PC-9 (cell line): ENCODE measurements at regions of chr4 and their contacts with region 1.

Region 1: GRCh38 chr4:41934815-41935651 is at the start of gene TMEM33:
- DNase-seq: peak; percentile 87 to 88
- H3K4me3 ChIP-seq: peak within 1 kb of the TSS; percentile 98
- H3K27ac ChIP-seq: peak within 1 kb of the TSS; percentile 69
- H3K4me1 ChIP-seq: peaks cover 42% of the 10 kb centered on the region
- H3K27me3 ChIP-seq: no peaks in the 10 kb centered on the region
- CTCF ChIP-seq: no peak
- total RNA-seq, gene TMEM33: 62.3 and 65.0 TPM in 2 replicates

Region 2: DNA sequence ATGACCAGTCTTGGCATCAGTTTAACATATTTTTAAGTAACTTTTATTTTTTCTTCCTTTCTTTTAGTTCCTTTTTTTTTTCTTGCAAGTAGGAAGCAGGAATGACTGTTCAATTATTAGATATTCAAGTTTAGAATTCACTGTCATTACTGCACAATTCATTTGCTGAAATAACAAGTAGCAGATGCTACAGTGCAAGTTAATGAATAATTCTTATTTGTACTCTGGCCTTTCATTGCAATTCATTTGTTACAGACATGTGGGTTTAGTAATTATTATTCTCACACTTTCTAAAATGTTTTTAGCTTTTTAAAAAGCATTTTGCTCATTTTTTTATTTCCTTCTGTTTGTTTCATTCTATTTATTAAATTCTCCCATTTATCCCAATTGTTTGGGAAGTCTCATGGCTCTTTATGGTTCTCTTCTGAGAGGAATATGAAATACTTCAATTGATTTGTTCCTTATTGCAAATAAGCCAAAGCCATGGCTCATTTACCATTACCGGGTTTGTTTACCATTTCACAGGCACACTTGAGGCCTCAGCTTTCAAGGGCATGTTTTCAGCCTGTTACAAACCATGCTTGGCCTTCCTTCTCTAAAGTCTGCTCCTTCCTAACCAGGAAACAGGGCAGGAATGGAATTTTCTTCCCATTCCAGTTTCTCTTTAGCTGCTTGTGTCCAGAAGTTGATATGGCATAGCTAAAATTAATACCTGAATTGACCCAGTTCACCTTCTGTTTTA is 41.9 kb after region 1 on chr4:
- CTCF ChIA-PET with region 1: no interaction called
- POLR2A ChIA-PET with region 1: interaction called, 19 read pairs
- intact Hi-C with region 1: no loop called
- DNase-seq: no peak
- H3K4me3 ChIP-seq: no peak overlapping the region
- H3K27ac ChIP-seq: no peak overlapping the region
- H3K4me1 ChIP-seq: no peaks in the 10 kb centered on the region
- H3K27me3 ChIP-seq: no peaks in the 10 kb centered on the region
- CTCF ChIP-seq: no peak

Region 3: DNA sequence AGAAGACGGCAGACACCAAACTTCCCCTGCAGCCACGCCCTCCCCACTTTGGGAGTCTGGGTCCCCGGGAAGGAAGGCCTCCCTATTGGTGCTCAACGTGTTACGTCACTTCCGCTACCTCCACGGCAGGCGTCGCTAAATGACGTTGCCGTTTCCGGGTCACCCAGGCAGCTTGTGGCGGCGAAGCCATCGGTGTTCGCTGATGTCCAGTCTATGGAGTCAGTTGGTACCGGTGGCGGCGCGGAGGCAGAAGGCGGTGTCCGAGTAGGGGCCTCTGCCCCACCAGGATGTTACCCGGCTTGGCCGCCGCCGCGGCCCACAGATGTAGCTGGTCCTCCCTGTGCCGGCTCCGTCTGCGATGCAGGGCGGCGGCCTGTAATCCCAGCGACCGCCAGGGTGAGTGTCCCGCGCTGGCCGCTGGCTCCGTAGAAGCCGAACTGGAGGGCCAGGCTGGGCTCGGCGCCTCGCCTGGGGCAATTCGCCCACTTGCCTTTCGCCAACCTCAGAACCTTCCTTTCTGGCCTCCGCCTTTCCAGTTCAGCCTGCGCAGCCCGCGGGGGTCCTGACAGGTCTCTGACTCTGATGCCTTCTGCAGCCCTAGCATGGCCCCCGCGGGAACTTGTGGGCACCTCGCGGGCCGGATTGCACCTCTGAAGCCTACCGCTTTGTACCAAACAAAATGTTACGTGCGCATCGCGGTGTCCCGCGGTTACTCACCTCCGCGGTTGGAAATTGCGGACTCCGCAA is 55.5 kb after region 1 on chr4 and contains the start of gene SLC30A9:
- CTCF ChIA-PET with region 1: no interaction called
- POLR2A ChIA-PET with region 1: no interaction called
- intact Hi-C with region 1: loop called (anchors 1 kb)
- DNase-seq: peak; percentile 87 to 88
- H3K4me3 ChIP-seq: peak within 1 kb of the TSS; percentile 70
- H3K27ac ChIP-seq: peak within 1 kb of the TSS; percentile 33
- H3K4me1 ChIP-seq: peaks cover 22% of the 10 kb centered on the region
- H3K27me3 ChIP-seq: no peaks in the 10 kb centered on the region
- CTCF ChIP-seq: peak; percentile 38; the same call in 1 of the 2 replicates
- total RNA-seq, gene SLC30A9: 37.0 and 47.6 TPM in 2 replicates

Region 4: DNA sequence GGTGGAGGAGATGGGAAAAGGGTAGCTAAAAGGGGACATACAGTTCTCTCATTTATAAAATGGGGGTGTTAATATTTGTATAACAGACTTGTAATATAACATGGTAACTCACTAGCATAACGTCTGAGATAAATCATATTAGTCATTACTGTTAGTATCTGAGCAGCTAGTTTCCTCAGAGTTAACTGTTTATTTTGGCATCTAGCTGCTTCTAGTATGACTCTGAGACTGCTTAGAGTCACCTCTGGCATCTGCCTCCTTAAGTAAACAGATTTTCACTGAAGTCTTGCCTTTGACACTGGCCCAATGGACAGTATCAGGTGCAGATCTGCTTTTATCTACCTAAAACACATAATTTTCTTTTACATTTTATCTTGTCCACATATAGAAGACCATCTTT is 113.4 kb after region 1 on chr4:
- CTCF ChIA-PET with region 1: no interaction called
- POLR2A ChIA-PET with region 1: no interaction called
- intact Hi-C with region 1: no loop called
- DNase-seq: peak in 1 of 2 experiments; percentile 68
- H3K4me3 ChIP-seq: no peak overlapping the region
- H3K27ac ChIP-seq: no peak overlapping the region
- H3K4me1 ChIP-seq: no peaks in the 10 kb centered on the region
- H3K27me3 ChIP-seq: no peaks in the 10 kb centered on the region
- CTCF ChIP-seq: no peak